ENCODE measurements at regions of chr1 and their contacts with region 1.

Region 1: GRCh38 chr1:103208844-103209243 is 100.5 kb upstream of the COL11A1 start:
- DNase-seq: no peak
- H3K4me3 ChIP-seq: no peak overlapping the region
- H3K27ac ChIP-seq: no peak overlapping the region
- H3K4me1 ChIP-seq: no peaks in the 10 kb centered on the region
- H3K27me3 ChIP-seq: no peaks in the 10 kb centered on the region
- CTCF ChIP-seq: no peak
- POLR2A ChIP-seq: no peak

Region 2: DNA sequence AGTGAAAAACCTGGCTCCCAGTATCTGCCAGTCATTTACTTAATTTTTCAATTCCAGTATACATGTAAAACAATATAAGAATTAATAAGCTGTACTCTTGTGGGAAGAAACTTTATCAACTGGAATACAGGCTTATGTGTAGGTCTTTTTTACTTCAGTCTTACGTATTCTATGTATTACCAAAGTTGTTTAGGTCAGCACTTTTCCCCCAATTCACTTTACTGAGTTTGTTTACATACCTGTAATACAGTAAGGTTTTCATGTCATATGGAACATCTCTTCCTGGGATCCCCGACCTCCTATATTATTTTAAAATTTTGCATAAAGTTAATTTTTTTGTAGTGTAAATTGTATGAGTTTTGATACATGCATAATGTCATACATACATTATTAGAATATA is 1030.4 kb before region 1 on chr1:
- CTCF ChIA-PET with region 1: no interaction called
- POLR2A ChIA-PET with region 1: no interaction called
- dilution Hi-C with region 1: no loop called
- intact Hi-C with region 1: loop called (anchors 5 kb)
- DNase-seq: no peak
- H3K4me3 ChIP-seq: no peak overlapping the region
- H3K27ac ChIP-seq: no peak overlapping the region
- H3K4me1 ChIP-seq: no peaks in the 10 kb centered on the region
- H3K27me3 ChIP-seq: no peaks in the 10 kb centered on the region
- CTCF ChIP-seq: no peak
- POLR2A ChIP-seq: no peak

Region 3: GRCh38 chr1:103084181-103084580 is 124.7 kb before region 1 on chr1:
- CTCF ChIA-PET with region 1: no interaction called
- POLR2A ChIA-PET with region 1: no interaction called
- dilution Hi-C with region 1: no loop called
- intact Hi-C with region 1: no loop called
- DNase-seq: no peak
- H3K4me3 ChIP-seq: no peak overlapping the region
- H3K27ac ChIP-seq: no peak overlapping the region
- H3K4me1 ChIP-seq: no peaks in the 10 kb centered on the region
- H3K27me3 ChIP-seq: peaks cover 0 to 2% of the 10 kb centered on the region in 2 experiments
- CTCF ChIP-seq: no peak
- POLR2A ChIP-seq: no peak

Region 4: DNA sequence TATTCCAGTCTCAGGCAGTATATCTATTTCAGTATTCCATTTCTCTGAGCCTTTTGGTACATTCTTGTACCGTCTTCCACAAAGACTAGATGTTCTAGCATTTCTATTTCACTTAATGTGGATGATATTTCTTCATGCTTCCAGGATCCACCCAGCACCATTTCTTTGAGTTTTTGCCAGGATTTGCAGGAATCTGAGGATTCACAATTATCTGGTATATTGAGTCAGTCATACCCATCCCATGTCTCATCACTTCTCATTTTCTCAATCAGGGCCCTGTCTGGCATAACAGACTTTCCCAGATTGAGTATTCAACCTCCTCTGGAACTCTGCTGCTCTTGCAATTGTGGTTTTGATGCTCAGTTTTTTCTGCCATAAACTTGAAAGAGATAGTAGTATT is 79.6 kb before region 1 on chr1:
- CTCF ChIA-PET with region 1: no interaction called
- POLR2A ChIA-PET with region 1: no interaction called
- dilution Hi-C with region 1: no loop called
- intact Hi-C with region 1: no loop called
- DNase-seq: no peak
- H3K4me3 ChIP-seq: no peak overlapping the region
- H3K27ac ChIP-seq: no peak overlapping the region
- H3K4me1 ChIP-seq: no peaks in the 10 kb centered on the region
- H3K27me3 ChIP-seq: no peaks in the 10 kb centered on the region
- CTCF ChIP-seq: no peak
- POLR2A ChIP-seq: no peak

Measured in endothelial cell of umbilical vein (primary cell).